Activated B cell treated with CpG ODN at 0.5 μM for 24 hours (primary cell): ENCODE measurements at regions of chr1 and their contacts with region 1.

Region 1: DNA sequence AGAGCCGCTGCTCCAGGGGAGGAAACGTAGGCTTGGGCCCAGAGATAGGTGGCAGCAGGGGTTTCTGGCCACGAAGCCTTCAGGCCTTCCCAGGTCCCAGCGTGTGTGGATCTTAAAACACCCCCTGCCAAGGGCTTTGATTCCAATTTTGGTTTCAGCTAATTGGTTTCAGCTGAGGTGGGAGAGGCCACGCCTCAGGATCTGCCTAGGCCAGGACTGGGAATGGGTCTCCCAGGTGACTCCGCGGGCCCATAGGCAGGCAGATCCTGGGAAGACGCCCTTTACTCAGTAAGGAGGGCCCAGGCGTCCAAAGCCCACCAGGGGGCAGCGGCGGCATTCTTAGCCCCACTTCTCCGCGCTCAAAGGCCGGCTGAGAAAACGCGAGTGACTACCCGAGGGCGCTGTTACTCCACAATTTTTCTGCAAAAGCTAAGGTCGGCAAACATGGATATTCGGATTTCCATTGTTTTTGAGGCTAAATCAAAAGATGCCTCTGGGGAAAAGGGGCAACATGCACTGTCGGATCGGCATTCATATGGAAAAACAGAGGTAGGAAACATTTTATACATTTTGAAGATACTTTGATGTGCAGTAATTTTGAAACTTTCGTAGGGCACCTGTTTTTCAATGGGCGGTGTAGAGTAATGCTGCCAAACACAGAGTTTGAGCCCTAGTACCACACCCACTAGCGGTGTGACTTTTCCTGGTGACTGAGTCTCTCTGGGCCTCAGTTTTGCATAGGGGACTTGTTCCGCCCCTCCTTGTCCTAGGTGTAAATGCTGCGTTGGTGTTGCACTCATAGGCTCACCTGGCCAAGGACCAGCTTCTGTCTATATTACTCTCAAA is 31.8 kb upstream of the BCL10 start:
- DNase-seq: peak; percentile 57
- ATAC-seq: peak; percentile 95
- H3K4me3 Mint-ChIP-seq: peak overlapping the region; percentile 66
- H3K27ac Mint-ChIP-seq: peak overlapping the region; percentile 41
- H3K4me1 Mint-ChIP-seq: peaks cover 9% of the 10 kb centered on the region
- H3K27me3 Mint-ChIP-seq: peaks cover 2% of the 10 kb centered on the region
- CTCF ChIP-seq: peak; percentile 61

Region 2: DNA sequence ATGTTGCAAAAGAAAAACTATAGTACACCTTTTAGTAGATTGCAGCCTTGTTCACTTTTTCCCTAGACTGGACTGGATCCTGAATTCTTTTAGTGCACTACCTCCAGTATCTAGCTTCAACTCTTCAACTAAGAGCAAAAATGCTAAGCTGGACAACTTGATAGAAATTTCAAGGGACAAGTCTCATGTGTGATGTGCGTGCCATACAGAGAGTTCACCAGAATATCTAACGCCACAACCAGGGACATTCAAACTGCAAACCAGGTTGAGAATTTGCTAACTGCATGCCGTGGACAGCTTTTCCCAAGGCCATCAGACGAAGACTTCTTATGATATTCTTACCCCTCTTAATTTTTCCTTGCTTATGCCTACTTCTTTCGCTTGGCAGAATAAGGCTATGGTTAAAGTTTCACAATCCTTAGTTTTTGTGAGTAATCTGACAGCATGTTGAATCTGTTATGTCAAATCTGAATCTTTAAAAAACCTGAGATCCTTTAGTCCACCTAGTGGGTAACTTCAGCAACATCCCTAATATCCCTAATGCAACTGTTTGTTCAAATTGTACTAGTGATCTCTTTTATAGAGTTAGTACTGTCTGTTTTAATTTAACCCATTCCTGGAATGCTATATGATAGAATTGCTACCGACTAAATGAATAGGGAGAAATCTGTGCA is 90.3 kb after region 1 on chr1:
- CTCF ChIA-PET with region 1: no interaction called
- POLR2A ChIA-PET with region 1: no interaction called
- intact Hi-C with region 1: loop called (anchors 2 kb)
- DNase-seq: no peak
- ATAC-seq: no peak
- H3K4me3 Mint-ChIP-seq: no peak overlapping the region
- H3K27ac Mint-ChIP-seq: no peak overlapping the region
- H3K4me1 Mint-ChIP-seq: no peaks in the 10 kb centered on the region
- H3K27me3 Mint-ChIP-seq: no peaks in the 10 kb centered on the region
- CTCF ChIP-seq: no peak

Region 3: GRCh38 chr1:85502625-85503083 is 194.4 kb after region 1 on chr1:
- CTCF ChIA-PET with region 1: no interaction called
- POLR2A ChIA-PET with region 1: no interaction called
- intact Hi-C with region 1: loop called (anchors 1 kb)
- DNase-seq: no peak
- ATAC-seq: no peak
- H3K4me3 Mint-ChIP-seq: no peak overlapping the region
- H3K27ac Mint-ChIP-seq: no peak overlapping the region
- H3K4me1 Mint-ChIP-seq: no peaks in the 10 kb centered on the region
- H3K27me3 Mint-ChIP-seq: peaks cover 10% of the 10 kb centered on the region
- CTCF ChIP-seq: no peak

Region 4: DNA sequence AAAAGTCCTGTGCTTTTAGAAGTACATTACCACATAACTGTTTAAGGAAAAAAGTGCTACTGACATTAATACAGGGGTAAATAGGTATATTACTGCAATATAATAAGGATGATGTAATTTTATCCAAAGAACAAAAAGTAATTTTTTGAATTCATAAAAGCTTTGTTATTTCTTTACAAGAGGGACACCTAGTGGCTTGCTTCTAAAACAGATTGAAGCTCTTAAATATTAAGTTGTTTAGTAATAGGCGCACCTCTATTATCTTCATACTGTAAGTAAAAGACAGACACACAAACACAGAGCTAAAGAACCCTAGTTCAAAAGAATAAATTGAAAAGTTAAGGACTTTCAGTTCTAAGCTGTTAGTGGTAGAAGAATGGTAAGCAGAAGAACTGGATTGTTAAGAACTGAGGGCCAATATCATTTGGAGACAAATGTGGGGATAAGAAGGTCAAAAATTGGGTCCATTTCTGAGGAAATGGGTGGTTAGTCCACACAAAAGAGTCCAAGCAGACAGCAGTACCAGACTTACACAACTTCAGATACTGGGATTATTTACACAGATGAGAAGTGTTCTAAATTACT is 384.6 kb after region 1 on chr1:
- CTCF ChIA-PET with region 1: interaction called, 6 read pairs
- POLR2A ChIA-PET with region 1: no interaction called
- intact Hi-C with region 1: loop called (anchors 1 kb)
- DNase-seq: no peak
- ATAC-seq: no peak
- H3K4me3 Mint-ChIP-seq: no peak overlapping the region
- H3K27ac Mint-ChIP-seq: no peak overlapping the region
- H3K4me1 Mint-ChIP-seq: no peaks in the 10 kb centered on the region
- H3K27me3 Mint-ChIP-seq: no peaks in the 10 kb centered on the region
- CTCF ChIP-seq: no peak

Region 5: GRCh38 chr1:85911742-85912141 is 603.5 kb after region 1 on chr1:
- CTCF ChIA-PET with region 1: no interaction called
- POLR2A ChIA-PET with region 1: no interaction called
- intact Hi-C with region 1: loop called (anchors 2 kb)
- DNase-seq: no peak
- ATAC-seq: no peak
- H3K4me3 Mint-ChIP-seq: no peak overlapping the region
- H3K27ac Mint-ChIP-seq: no peak overlapping the region
- H3K4me1 Mint-ChIP-seq: no peaks in the 10 kb centered on the region
- H3K27me3 Mint-ChIP-seq: no peaks in the 10 kb centered on the region
- CTCF ChIP-seq: no peak